ENCODE measurements at regions of chr14 and their contacts with region 1.

Region 1: DNA sequence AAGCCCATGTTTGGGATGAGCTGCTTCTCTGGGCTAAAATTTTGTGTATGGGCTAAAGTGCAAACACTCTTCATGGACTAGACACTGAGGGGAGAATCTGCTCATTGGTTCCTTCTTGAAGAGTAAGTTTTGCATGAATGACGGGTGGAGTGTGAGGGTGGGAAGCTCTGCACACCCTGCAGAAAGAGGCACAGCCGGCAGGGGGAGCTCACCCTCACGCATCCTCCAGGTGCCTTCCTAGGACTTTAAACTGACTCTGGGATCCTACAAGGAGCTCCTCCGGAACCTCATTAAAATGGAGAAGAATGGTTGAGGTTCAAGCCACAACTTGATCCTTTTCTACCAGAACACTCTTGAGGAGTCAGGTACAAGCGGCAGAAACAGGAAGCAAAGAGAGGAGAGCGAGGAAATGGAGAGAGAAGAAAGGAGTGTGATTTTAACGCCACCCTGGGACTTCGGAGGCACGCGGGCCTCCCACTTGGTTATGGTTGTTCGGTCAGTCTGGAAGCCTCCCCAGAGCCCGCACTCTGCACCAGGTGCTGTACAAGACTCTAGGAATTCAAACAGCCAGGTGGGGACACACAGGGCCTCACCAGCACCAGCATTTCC is 87.5 kb downstream of the SETD3 start:
- DNase-seq: peak in 4 of 9 experiments; percentile 32 to 50 (median 41)
- ATAC-seq: no peak
- H3K4me3 ChIP-seq: no peak overlapping the region
- H3K4me3 Mint-ChIP-seq: no peak overlapping the region
- H3K27ac ChIP-seq: no peak overlapping the region
- H3K27ac Mint-ChIP-seq: no peak overlapping the region
- H3K4me1 ChIP-seq: no peaks in the 10 kb centered on the region
- H3K4me1 Mint-ChIP-seq: peaks cover 14% of the 10 kb centered on the region
- H3K27me3 ChIP-seq: no peaks in the 10 kb centered on the region
- H3K27me3 Mint-ChIP-seq: no peaks in the 10 kb centered on the region
- CTCF ChIP-seq: peak; percentile 45

Region 2: DNA sequence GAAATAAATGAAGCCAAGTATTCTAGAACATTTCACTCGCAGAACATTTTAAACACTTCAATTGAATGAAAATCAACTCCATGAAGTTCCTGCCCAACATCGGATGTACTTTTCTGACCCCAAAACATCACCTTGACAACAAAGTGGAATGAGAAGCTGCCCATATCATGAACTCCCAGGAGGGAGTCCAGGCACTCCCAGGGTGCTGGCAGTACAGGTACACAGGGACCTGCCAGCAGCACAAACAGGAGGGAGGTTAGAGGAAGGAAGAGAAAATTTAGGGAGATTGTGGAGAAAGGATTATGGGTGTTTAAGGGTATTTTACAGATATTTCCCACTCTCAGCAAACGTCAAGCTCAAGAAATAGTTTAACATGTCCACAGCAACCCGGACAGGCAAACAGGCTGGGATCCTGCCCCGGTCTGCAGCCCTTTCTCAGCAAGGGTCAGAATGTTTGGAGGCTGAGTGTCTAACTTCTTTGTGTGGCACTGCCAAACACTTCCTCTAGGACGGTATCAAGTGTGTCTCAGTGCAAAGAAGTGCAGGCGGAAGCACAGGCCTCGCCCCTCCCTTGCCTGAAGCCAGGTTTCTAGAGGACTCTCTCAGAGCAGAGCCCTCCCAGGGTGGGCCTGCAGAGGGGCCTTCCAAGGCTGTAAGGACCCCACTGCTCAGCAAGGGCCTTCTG is 15.3 kb after region 1 on chr14:
- CTCF ChIA-PET with region 1: interaction called, 52 read pairs
- POLR2A ChIA-PET with region 1: no interaction called
- intact Hi-C with region 1: no loop called
- DNase-seq: no peak
- ATAC-seq: no peak
- H3K4me3 ChIP-seq: no peak overlapping the region
- H3K4me3 Mint-ChIP-seq: no peak overlapping the region
- H3K27ac ChIP-seq: no peak overlapping the region
- H3K27ac Mint-ChIP-seq: no peak overlapping the region
- H3K4me1 ChIP-seq: no peaks in the 10 kb centered on the region
- H3K4me1 Mint-ChIP-seq: no peaks in the 10 kb centered on the region
- H3K27me3 ChIP-seq: no peaks in the 10 kb centered on the region
- H3K27me3 Mint-ChIP-seq: no peaks in the 10 kb centered on the region
- CTCF ChIP-seq: no peak

Region 3: GRCh38 chr14:99440277-99440676 is 47.1 kb after region 1 on chr14:
- CTCF ChIA-PET with region 1: interaction called, 11 read pairs
- POLR2A ChIA-PET with region 1: no interaction called
- intact Hi-C with region 1: no loop called
- DNase-seq: no peak
- ATAC-seq: no peak
- H3K4me3 ChIP-seq: no peak overlapping the region
- H3K4me3 Mint-ChIP-seq: no peak overlapping the region
- H3K27ac ChIP-seq: no peak overlapping the region
- H3K27ac Mint-ChIP-seq: no peak overlapping the region
- H3K4me1 ChIP-seq: peaks cover 25% of the 10 kb centered on the region
- H3K4me1 Mint-ChIP-seq: peaks cover 45% of the 10 kb centered on the region
- H3K27me3 ChIP-seq: no peaks in the 10 kb centered on the region
- H3K27me3 Mint-ChIP-seq: no peaks in the 10 kb centered on the region
- CTCF ChIP-seq: no peak

Region 4: GRCh38 chr14:101072945-101073597 is 1679.9 kb after region 1 on chr14:
- CTCF ChIA-PET with region 1: no interaction called
- POLR2A ChIA-PET with region 1: no interaction called
- intact Hi-C with region 1: no loop called
- DNase-seq: peak in 2 of 9 experiments; percentile 9 to 36
- ATAC-seq: no peak
- H3K4me3 ChIP-seq: no peak overlapping the region
- H3K4me3 Mint-ChIP-seq: no peak overlapping the region
- H3K27ac ChIP-seq: no peak overlapping the region
- H3K27ac Mint-ChIP-seq: no peak overlapping the region
- H3K4me1 ChIP-seq: peaks cover 9% of the 10 kb centered on the region
- H3K4me1 Mint-ChIP-seq: peaks cover 5% of the 10 kb centered on the region
- H3K27me3 ChIP-seq: peaks cover 0 to 7% of the 10 kb centered on the region in 2 experiments
- H3K27me3 Mint-ChIP-seq: peaks cover 22% of the 10 kb centered on the region
- CTCF ChIP-seq: no peak

Measured in CD8-positive, alpha-beta T cell (primary cell).